Heart left ventricle (tissue), 16 donors: ENCODE measurements at regions of chr7 and their contacts with region 1.

Region 1: DNA sequence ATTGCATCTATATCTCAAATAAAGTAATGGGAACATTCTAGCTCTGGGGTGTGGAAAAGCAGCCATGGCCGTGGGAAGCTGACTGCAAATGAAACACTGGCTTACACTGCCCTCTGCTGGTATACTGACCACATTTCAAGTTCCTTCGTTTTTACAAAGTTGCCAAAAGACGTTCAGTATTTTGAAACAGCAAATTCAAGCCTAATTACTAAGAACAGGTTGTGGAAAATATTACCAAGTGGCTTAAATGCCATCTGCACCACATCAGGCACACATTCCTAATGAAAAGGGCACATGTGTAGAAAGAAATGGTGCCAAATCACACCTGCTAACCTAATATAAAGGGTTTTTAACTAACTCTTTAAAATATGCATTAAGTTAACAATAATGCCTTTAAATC is 83.9 kb downstream of the JAZF1 start:
- DNase-seq: peak in 3 of 5 donors; percentile 48 to 57 (median 56)
- ATAC-seq: peak; percentile 48 to 71 (median 66)
- H3K4me3 ChIP-seq: no peak overlapping the region
- H3K27ac ChIP-seq: peak overlapping the region in 4 of 12 donors; percentile 0 to 67 (median 18)
- H3K4me1 ChIP-seq: peaks cover 0 to 35% (median 12%) of the 10 kb centered on the region in 12 donors
- H3K27me3 ChIP-seq: no peaks in the 10 kb centered on the region
- CTCF ChIP-seq: peak; percentile 74 to 91 (median 82)
- POLR2A ChIP-seq: no peak

Region 2: DNA sequence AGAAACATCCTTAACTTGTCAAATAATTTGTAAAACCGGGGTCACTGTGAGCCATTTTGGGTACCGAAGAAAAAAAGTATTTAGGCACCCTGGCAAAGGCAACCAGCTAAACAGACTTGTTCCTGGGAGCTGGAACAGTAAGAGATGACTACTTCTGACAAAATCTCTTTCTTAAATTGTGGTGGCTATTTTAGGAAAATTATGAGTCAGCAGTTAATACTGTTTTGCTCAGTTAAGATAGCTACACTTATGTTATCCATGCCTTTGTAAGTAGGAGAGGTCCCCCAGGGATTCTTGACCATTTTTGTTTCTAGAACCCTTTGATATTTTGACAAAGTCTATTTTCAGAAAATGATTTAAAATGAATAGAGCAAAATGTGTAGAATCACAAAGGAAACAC is 288.1 kb before region 1 on chr7:
- intact Hi-C with region 1: loop called in 1 of 10 experiments (anchors 10 kb)
- DNase-seq: no peak
- ATAC-seq: peak; percentile 68 to 88 (median 78)
- H3K4me3 ChIP-seq: no peak overlapping the region
- H3K27ac ChIP-seq: peak overlapping the region in 8 of 12 donors; percentile 5 to 39 (median 22)
- H3K4me1 ChIP-seq: peaks cover 0 to 17% (median 9%) of the 10 kb centered on the region in 12 donors
- H3K27me3 ChIP-seq: no peaks in the 10 kb centered on the region
- CTCF ChIP-seq: no peak
- POLR2A ChIP-seq: no peak

Region 3: GRCh38 chr7:27933671-27934565 is 162.8 kb before region 1 on chr7:
- intact Hi-C with region 1: loop called in 1 of 10 experiments (anchors 10 kb)
- DNase-seq: no peak
- ATAC-seq: no peak
- H3K4me3 ChIP-seq: no peak overlapping the region
- H3K27ac ChIP-seq: no peak overlapping the region
- H3K4me1 ChIP-seq: peaks cover 0 to 9% (median 0%) of the 10 kb centered on the region in 12 donors
- H3K27me3 ChIP-seq: no peaks in the 10 kb centered on the region
- CTCF ChIP-seq: peak in 6 of 12 donors; percentile 10 to 39 (median 21)
- POLR2A ChIP-seq: no peak

Region 4: GRCh38 chr7:28062197-28062991 is 34.3 kb before region 1 on chr7:
- intact Hi-C with region 1: loop called in 3 of 10 experiments (anchors 5 kb)
- DNase-seq: peak; percentile 42 to 74 (median 62)
- ATAC-seq: peak; percentile 45 to 92 (median 88)
- H3K4me3 ChIP-seq: no peak overlapping the region
- H3K27ac ChIP-seq: no peak overlapping the region
- H3K4me1 ChIP-seq: peaks cover 0 to 34% (median 10%) of the 10 kb centered on the region in 12 donors
- H3K27me3 ChIP-seq: no peaks in the 10 kb centered on the region
- CTCF ChIP-seq: peak; percentile 43 to 75 (median 60)
- POLR2A ChIP-seq: no peak

Region 5: GRCh38 chr7:28112883-28113540 is 16.3 kb after region 1 on chr7:
- intact Hi-C with region 1: no loop called
- DNase-seq: peak in 1 of 5 donors; percentile 45
- ATAC-seq: peak in 3 of 4 donors; percentile 17 to 52 (median 23)
- H3K4me3 ChIP-seq: no peak overlapping the region
- H3K27ac ChIP-seq: peak overlapping the region in 1 of 12 donors; percentile 49
- H3K4me1 ChIP-seq: peaks cover 0 to 32% (median 17%) of the 10 kb centered on the region in 12 donors
- H3K27me3 ChIP-seq: no peaks in the 10 kb centered on the region
- CTCF ChIP-seq: no peak
- POLR2A ChIP-seq: no peak

Region 6: GRCh38 chr7:28163949-28164348 is 67.2 kb after region 1 on chr7:
- intact Hi-C with region 1: no loop called
- DNase-seq: no peak
- ATAC-seq: peak; percentile 22 to 53 (median 48)
- H3K4me3 ChIP-seq: no peak overlapping the region
- H3K27ac ChIP-seq: no peak overlapping the region
- H3K4me1 ChIP-seq: peaks cover 0 to 34% (median 17%) of the 10 kb centered on the region in 12 donors
- H3K27me3 ChIP-seq: no peaks in the 10 kb centered on the region
- CTCF ChIP-seq: no peak
- POLR2A ChIP-seq: no peak